ENCODE measurements at regions of chr14 and their contacts with region 1.

Region 1: GRCh38 chr14:23068476-23069412 is 11.4 kb upstream of the CDH24 start:
- DNase-seq: peak; percentile 61
- H3K4me3 ChIP-seq: peak overlapping the region; percentile 39
- CTCF ChIP-seq: peak; percentile 92

Region 2: DNA sequence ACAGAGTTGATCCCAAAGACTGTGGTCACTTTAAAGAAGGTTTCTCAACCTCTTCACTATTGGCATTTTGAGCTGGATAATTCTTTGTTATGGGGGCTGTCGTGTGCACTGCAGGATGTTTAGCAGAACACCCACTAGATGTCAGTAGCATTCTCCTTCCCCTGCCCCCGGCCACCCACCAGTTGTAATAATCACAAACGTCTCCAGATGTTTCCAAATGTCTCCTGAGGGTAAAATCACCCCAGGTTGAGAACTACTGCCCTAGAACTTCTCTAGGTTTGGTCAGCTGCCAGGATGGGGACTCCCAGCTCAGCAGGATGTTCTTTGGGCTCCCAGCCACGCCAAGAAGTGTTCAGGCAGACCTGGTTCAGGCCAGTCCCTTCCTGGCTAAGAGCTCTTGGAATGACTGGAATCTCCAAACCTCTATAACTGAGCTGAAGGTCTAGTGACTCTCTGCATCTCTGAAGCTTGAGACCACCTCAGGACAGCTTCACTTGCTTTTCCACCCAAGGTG is 73.9 kb before region 1 on chr14:
- CTCF ChIA-PET with region 1: interaction called, 1,423 read pairs
- POLR2A ChIA-PET with region 1: no interaction called
- DNase-seq: no peak
- H3K4me3 ChIP-seq: no peak overlapping the region
- CTCF ChIP-seq: peak; percentile 65

Region 3: GRCh38 chr14:23025151-23025814 is 43.5 kb before region 1 on chr14:
- CTCF ChIA-PET with region 1: interaction called, 11 read pairs
- POLR2A ChIA-PET with region 1: no interaction called
- DNase-seq: no peak
- H3K4me3 ChIP-seq: no peak overlapping the region
- CTCF ChIP-seq: no peak

Region 4: GRCh38 chr14:23085458-23085857 is 16.7 kb after region 1 on chr14:
- CTCF ChIA-PET with region 1: interaction called, 452 read pairs
- POLR2A ChIA-PET with region 1: interaction called, 7 read pairs
- DNase-seq: no peak
- H3K4me3 ChIP-seq: no peak overlapping the region
- CTCF ChIP-seq: no peak

Region 5: GRCh38 chr14:23104591-23105347 is 36.0 kb after region 1 on chr14 and contains the start of gene CIROP:
- CTCF ChIA-PET with region 1: interaction called, 256 read pairs
- POLR2A ChIA-PET with region 1: interaction called, 4 read pairs
- DNase-seq: no peak
- H3K4me3 ChIP-seq: no peak within 1 kb of the TSS
- CTCF ChIP-seq: no peak

Region 6: GRCh38 chr14:23186913-23187654 is 118.3 kb after region 1 on chr14:
- CTCF ChIA-PET with region 1: interaction called, 13 read pairs
- POLR2A ChIA-PET with region 1: interaction called, 3 read pairs
- DNase-seq: no peak
- H3K4me3 ChIP-seq: no peak overlapping the region
- CTCF ChIP-seq: peak; percentile 66

Measured in AG04449 (cell line).